CD8-positive, alpha-beta T cell (primary cell): ENCODE measurements at regions of chr3 and their contacts with region 1.

Region 1: DNA sequence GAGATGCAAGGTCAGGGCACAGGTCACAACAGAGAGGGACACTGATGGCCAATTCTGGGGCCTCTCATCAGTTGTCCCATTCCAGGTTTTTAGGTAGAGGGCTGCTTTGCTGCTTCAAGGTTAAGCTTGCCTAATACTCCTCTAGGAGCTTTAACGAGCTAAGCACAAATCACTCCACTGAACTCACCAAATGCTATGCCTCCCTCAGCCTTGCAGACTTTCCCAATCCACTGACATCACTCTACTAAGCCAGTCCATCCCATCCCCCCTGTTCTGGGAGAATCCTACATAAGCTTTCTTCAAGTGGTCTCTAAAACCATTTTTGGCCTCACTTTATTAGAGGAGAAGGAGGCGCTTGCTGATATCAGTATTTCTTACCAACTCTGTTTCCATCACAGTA is 24.8 kb upstream of the PDCD6IP start:
- DNase-seq: no peak
- ATAC-seq: no peak
- H3K4me3 ChIP-seq: no peak overlapping the region
- H3K4me3 Mint-ChIP-seq: no peak overlapping the region
- H3K27ac ChIP-seq: no peak overlapping the region
- H3K27ac Mint-ChIP-seq: no peak overlapping the region
- H3K4me1 ChIP-seq: no peaks in the 10 kb centered on the region
- H3K4me1 Mint-ChIP-seq: no peaks in the 10 kb centered on the region
- H3K27me3 ChIP-seq: no peaks in the 10 kb centered on the region
- H3K27me3 Mint-ChIP-seq: peaks cover 4% of the 10 kb centered on the region
- CTCF ChIP-seq: no peak

Region 2: DNA sequence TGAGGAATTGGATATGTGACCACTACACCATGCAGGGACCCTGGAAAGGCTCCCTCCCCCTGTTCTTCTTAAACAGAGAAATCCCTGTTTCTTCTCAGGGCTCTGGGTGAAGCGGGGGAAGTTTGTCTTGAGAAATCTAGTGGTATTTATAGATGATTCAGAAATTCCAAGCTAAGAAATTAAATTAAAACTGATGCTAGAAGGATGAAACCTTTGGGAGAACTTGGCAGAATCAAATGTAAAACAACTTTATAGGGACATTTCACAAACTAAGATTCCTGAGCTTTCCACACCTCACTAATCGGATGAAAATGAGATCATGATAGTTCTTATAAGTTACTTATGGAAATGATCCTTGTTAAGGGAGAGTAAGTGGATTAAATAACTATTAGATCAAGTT is 442.2 kb before region 1 on chr3:
- CTCF ChIA-PET with region 1: no interaction called
- POLR2A ChIA-PET with region 1: no interaction called
- intact Hi-C with region 1: no loop called
- DNase-seq: no peak
- ATAC-seq: no peak
- H3K4me3 ChIP-seq: no peak overlapping the region
- H3K4me3 Mint-ChIP-seq: no peak overlapping the region
- H3K27ac ChIP-seq: no peak overlapping the region
- H3K27ac Mint-ChIP-seq: no peak overlapping the region
- H3K4me1 ChIP-seq: no peaks in the 10 kb centered on the region
- H3K4me1 Mint-ChIP-seq: no peaks in the 10 kb centered on the region
- H3K27me3 ChIP-seq: peaks cover 0 to 2% of the 10 kb centered on the region in 2 experiments
- H3K27me3 Mint-ChIP-seq: peaks cover 5% of the 10 kb centered on the region
- CTCF ChIP-seq: no peak

Region 3: GRCh38 chr3:33636125-33636850 is 137.3 kb before region 1 on chr3:
- CTCF ChIA-PET with region 1: interaction called, 14 read pairs
- POLR2A ChIA-PET with region 1: no interaction called
- intact Hi-C with region 1: loop called in 1 of 2 experiments (anchors 1 kb)
- DNase-seq: peak in 2 of 9 experiments; percentile 57 to 68
- ATAC-seq: peak; percentile 71
- H3K4me3 ChIP-seq: no peak overlapping the region
- H3K4me3 Mint-ChIP-seq: no peak overlapping the region
- H3K27ac ChIP-seq: no peak overlapping the region
- H3K27ac Mint-ChIP-seq: no peak overlapping the region
- H3K4me1 ChIP-seq: no peaks in the 10 kb centered on the region
- H3K4me1 Mint-ChIP-seq: peaks cover 2% of the 10 kb centered on the region
- H3K27me3 ChIP-seq: no peaks in the 10 kb centered on the region
- H3K27me3 Mint-ChIP-seq: no peaks in the 10 kb centered on the region
- CTCF ChIP-seq: peak; percentile 63